Gastrocnemius medialis (tissue), 4 donors: ENCODE measurements at regions of chr11 and their contacts with region 1.

Region 1: GRCh38 chr11:4636962-4637661 is at the start of gene OR51D1:
- DNase-seq: peak in 1 of 2 donors; percentile 45
- ATAC-seq: peak; percentile 72 to 88
- H3K4me3 ChIP-seq: peak within 1 kb of the TSS; percentile 27 to 49 (median 32)
- H3K27ac ChIP-seq: no peak within 1 kb of the TSS
- H3K4me1 ChIP-seq: no peaks in the 10 kb centered on the region
- H3K27me3 ChIP-seq: no peaks in the 10 kb centered on the region
- CTCF ChIP-seq: peak; percentile 42 to 88 (median 77)
- POLR2A ChIP-seq: no peak
- total RNA-seq, gene OR51D1: not detected

Region 2: DNA sequence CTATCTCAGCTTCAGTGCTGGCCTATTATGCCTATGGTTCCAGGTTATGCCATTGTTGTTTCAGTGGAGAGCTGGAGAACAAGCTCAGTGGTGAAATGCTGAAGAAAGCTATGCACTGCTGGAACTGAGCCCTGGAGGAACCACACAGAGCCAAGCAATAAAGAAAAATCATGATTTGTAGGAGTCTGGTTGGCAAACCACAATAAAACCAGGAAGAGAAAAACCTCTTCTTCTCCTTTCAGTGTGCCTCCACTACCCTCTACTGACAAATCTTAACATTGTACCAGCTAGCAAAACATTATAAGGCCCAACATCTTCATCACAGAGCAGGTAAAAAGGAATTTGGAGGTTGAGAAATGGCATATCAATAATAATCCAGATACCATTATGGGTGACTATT is 189.3 kb after region 1 on chr11:
- in situ Hi-C with region 1: loop called in 2 of 4 experiments (anchors 10 kb)
- intact Hi-C with region 1: loop called (anchors 1 kb)
- DNase-seq: no peak
- ATAC-seq: no peak
- H3K4me3 ChIP-seq: no peak overlapping the region
- H3K27ac ChIP-seq: no peak overlapping the region
- H3K4me1 ChIP-seq: no peaks in the 10 kb centered on the region
- H3K27me3 ChIP-seq: no peaks in the 10 kb centered on the region
- CTCF ChIP-seq: peak in 2 of 5 experiments; percentile 28 to 30
- POLR2A ChIP-seq: no peak

Region 3: GRCh38 chr11:4991060-4991459 is 353.9 kb after region 1 on chr11:
- in situ Hi-C with region 1: loop called in 1 of 4 experiments (anchors 25 kb)
- intact Hi-C with region 1: no loop called
- DNase-seq: no peak
- ATAC-seq: no peak
- H3K4me3 ChIP-seq: no peak overlapping the region
- H3K27ac ChIP-seq: no peak overlapping the region
- H3K4me1 ChIP-seq: no peaks in the 10 kb centered on the region
- H3K27me3 ChIP-seq: no peaks in the 10 kb centered on the region
- CTCF ChIP-seq: no peak
- POLR2A ChIP-seq: no peak

Region 4: GRCh38 chr11:5004424-5005274 is 367.5 kb after region 1 on chr11:
- in situ Hi-C with region 1: loop called in 2 of 4 experiments (anchors 25 kb)
- intact Hi-C with region 1: loop called (anchors 5 kb)
- DNase-seq: no peak
- ATAC-seq: no peak
- H3K4me3 ChIP-seq: no peak overlapping the region
- H3K27ac ChIP-seq: no peak overlapping the region
- H3K4me1 ChIP-seq: no peaks in the 10 kb centered on the region
- H3K27me3 ChIP-seq: no peaks in the 10 kb centered on the region
- CTCF ChIP-seq: peak in 3 of 5 experiments; percentile 25 to 34 (median 32)
- POLR2A ChIP-seq: no peak